ENCODE measurements at regions of chr5 and their contacts with region 1.

Region 1: GRCh38 chr5:134041570-134042411 is 37.0 kb upstream of the VDAC1 start:
- DNase-seq: no peak
- H3K4me3 Mint-ChIP-seq: no peak overlapping the region
- H3K27ac Mint-ChIP-seq: no peak overlapping the region
- H3K4me1 Mint-ChIP-seq: peaks cover 51% of the 10 kb centered on the region
- H3K27me3 Mint-ChIP-seq: no peaks in the 10 kb centered on the region

Region 2: DNA sequence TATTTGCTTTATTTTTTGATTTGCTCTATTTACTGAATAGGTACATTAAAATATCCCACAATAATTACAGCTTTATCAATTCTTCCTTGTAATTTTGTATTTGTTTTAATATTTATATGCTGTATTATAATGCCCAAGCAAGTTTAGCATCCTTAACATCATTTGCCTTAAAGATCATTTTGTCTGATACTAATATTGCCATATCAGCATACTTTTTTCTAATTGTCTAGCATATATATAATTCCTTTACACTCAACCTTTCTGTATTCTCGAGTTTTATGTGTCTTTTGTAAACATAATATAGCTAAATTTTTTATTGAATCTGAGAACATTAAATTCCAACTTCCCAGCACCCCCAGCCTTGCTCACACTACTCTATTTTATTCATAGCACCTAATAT is 1878.8 kb before region 1 on chr5:
- CTCF ChIA-PET with region 1: no interaction called
- intact Hi-C with region 1: no loop called
- DNase-seq: no peak
- H3K4me3 Mint-ChIP-seq: no peak overlapping the region
- H3K27ac Mint-ChIP-seq: no peak overlapping the region
- H3K4me1 Mint-ChIP-seq: no peaks in the 10 kb centered on the region
- H3K27me3 Mint-ChIP-seq: peaks cover 3% of the 10 kb centered on the region

Region 3: GRCh38 chr5:134004592-134005375 is 37.0 kb before region 1 on chr5 and contains the start of gene VDAC1:
- CTCF ChIA-PET with region 1: interaction called, 9 read pairs
- intact Hi-C with region 1: loop called (anchors 1 kb)
- DNase-seq: peak; percentile 79
- H3K4me3 Mint-ChIP-seq: peak within 1 kb of the TSS; percentile 89
- H3K27ac Mint-ChIP-seq: peak within 1 kb of the TSS; percentile 95
- H3K4me1 Mint-ChIP-seq: peaks cover 42% of the 10 kb centered on the region
- H3K27me3 Mint-ChIP-seq: no peaks in the 10 kb centered on the region
- total RNA-seq, gene VDAC1: 485 to 513 TPM

Region 4: GRCh38 chr5:134070725-134071613 is 29.2 kb after region 1 on chr5:
- CTCF ChIA-PET with region 1: interaction called, 79 read pairs
- intact Hi-C with region 1: loop called (anchors 1 kb)
- DNase-seq: peak; percentile 85
- H3K4me3 Mint-ChIP-seq: peak overlapping the region; percentile 79
- H3K27ac Mint-ChIP-seq: peak overlapping the region; percentile 97
- H3K4me1 Mint-ChIP-seq: peaks cover 70% of the 10 kb centered on the region
- H3K27me3 Mint-ChIP-seq: no peaks in the 10 kb centered on the region

Region 5: DNA sequence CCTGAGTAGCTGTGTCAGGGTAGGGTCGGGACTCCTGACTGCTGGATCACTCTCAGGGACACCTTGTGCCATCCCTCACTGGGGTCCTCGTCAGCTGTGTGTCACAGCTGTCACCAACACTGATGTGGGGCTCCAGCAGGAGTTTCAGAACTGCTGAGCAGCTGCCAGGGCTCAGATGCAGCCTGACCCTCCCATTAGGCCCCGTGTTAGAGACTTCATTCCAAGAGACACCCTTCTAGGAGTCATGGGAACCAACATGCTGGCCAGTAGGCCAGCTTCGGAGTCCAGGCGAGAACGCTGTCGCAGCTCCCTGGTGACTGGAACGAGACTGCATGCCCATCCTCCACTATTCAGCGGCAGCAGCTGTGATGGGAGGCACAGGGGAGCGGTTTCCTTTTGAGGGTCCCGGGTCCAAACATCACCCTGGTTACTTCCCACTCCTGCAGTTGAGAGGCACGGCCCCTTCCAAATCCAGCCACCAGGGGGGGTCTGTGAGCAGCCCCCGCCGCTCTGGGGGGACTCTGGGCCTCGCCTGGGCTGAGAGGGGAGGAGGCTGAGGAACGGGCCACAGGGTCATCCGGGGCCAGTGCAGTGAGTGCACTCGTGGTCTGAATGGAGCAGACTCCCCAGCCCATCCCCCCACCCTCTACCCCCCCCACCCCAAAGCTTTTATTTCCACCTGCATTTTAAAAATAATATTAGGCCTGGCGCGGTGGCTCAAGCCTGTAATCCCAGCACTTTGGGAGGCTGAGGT is 60.1 kb after region 1 on chr5:
- CTCF ChIA-PET with region 1: no interaction called
- intact Hi-C with region 1: loop called (anchors 1 kb)
- DNase-seq: peak; percentile 78
- H3K4me3 Mint-ChIP-seq: peak overlapping the region; percentile 12
- H3K27ac Mint-ChIP-seq: peak overlapping the region; percentile 24
- H3K4me1 Mint-ChIP-seq: peaks cover 95% of the 10 kb centered on the region
- H3K27me3 Mint-ChIP-seq: no peaks in the 10 kb centered on the region

Region 6: DNA sequence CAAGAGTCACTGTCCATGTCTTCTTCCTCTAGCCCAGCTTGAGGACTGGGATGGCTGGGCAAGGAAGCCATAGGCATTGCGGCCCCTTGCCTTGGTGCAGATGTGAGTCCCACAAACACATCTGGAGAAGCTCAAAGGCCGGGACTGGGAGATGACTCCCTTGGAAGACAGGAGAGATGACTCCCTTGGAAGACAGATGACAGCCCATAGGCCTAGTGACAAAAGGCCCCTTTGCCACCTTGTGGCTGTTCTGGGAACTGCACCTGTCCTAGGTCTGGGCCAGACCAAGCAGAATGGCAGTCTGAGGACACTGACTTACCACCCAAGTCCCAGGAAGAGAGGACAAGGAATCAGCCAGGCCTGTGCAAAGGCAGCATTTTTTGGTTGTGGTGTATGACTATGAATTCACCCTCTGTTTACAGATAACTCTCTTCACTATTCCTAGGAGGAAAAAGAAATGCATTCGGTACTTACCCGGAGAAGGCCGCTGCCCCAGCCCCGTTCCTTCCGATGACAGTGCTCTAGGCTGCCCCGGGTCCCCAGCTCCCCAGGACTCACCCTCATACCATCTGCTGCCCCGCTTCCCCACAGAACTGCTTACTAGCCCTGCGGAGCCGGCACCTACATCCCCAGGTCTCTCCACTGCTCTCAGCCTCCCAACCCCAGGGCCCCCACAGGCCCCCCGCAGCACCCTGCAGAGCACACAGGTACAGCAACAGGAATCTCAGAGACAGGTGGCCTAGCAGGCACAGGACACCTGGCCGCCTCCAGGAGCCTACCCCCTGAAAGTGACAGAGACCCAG is 104.2 kb after region 1 on chr5:
- CTCF ChIA-PET with region 1: interaction called, 593 read pairs
- intact Hi-C with region 1: loop called (anchors 1 kb)
- DNase-seq: peak; percentile 93
- H3K4me3 Mint-ChIP-seq: no peak overlapping the region
- H3K27ac Mint-ChIP-seq: peak overlapping the region; percentile 79
- H3K4me1 Mint-ChIP-seq: peaks cover 42% of the 10 kb centered on the region
- H3K27me3 Mint-ChIP-seq: no peaks in the 10 kb centered on the region

Region 7: DNA sequence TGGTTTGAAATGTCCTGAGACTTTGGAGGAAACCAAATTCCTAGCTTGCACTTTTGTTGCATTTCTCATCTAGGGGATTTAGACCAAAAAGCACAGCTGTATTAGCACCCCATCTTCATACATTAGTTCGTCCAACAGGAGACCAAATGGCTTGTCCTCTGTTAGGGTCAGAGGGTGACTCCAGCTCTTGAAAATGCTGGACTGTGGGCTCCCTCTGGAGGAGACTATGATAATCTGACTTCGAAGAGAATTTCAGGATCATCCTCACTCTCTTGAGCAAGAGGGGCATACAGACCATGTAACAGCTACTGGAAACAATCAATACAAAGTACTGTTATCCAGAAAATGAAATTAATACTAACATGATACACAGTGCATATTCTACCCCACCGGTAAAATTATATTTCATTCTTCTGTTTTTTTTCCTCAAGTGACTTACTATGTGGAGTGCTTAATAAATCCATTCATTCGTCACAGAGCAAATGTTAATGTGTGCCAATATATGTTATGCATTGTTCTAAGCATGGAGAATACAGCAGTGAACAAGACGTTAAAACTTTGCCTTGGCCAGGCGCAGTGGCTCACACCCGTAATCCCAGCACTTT is 247.8 kb after region 1 on chr5:
- CTCF ChIA-PET with region 1: interaction called, 3 read pairs
- intact Hi-C with region 1: loop called (anchors 1 kb)
- DNase-seq: peak; percentile 56
- H3K4me3 Mint-ChIP-seq: no peak overlapping the region
- H3K27ac Mint-ChIP-seq: no peak overlapping the region
- H3K4me1 Mint-ChIP-seq: peaks cover 4% of the 10 kb centered on the region
- H3K27me3 Mint-ChIP-seq: no peaks in the 10 kb centered on the region

Measured in activated naive CD4-positive, alpha-beta T cell treated with anti-CD3 and anti-CD28 coated beads for 36 hours (primary cell).